ENCODE measurements at regions of chr12 and their contacts with region 1.

Region 1: GRCh38 chr12:69900720-69901131 is 75.7 kb downstream of the MYRFL start:
- DNase-seq: peak in 4 of 5 donors; percentile 61 to 81 (median 68)
- ATAC-seq: peak in 3 of 4 donors; percentile 49 to 65 (median 58)
- H3K4me3 ChIP-seq: no peak overlapping the region
- H3K27ac ChIP-seq: peak overlapping the region in 2 of 12 donors; percentile 2 to 25
- H3K4me1 ChIP-seq: peaks cover 0 to 32% (median 9%) of the 10 kb centered on the region in 12 donors
- H3K27me3 ChIP-seq: no peaks in the 10 kb centered on the region
- CTCF ChIP-seq: peak; percentile 78 to 93 (median 86)
- POLR2A ChIP-seq: no peak

Region 2: DNA sequence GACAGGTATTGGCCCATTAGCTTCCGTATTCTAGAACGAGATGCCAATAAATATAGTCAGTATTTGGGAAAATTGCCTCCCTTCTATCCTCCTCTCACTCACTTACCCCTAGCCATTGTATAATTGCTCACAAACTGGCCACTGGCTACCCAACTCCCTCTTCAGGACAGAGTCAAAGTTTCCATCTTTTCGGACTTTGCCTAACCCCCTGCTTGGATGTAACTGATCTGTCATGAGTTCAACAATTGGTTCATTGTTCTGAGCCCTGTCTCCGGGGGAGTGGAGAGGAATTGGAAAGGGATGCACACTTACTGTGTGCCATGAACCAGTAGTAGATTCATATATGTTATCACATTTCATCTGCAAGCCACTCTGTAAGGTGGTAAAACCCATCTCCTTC is 63.5 kb before region 1 on chr12:
- intact Hi-C with region 1: no loop called
- DNase-seq: no peak
- ATAC-seq: no peak
- H3K4me3 ChIP-seq: no peak overlapping the region
- H3K27ac ChIP-seq: no peak overlapping the region
- H3K4me1 ChIP-seq: peaks cover 0 to 7% (median 0%) of the 10 kb centered on the region in 12 donors
- H3K27me3 ChIP-seq: no peaks in the 10 kb centered on the region
- CTCF ChIP-seq: no peak
- POLR2A ChIP-seq: no peak

Region 3: DNA sequence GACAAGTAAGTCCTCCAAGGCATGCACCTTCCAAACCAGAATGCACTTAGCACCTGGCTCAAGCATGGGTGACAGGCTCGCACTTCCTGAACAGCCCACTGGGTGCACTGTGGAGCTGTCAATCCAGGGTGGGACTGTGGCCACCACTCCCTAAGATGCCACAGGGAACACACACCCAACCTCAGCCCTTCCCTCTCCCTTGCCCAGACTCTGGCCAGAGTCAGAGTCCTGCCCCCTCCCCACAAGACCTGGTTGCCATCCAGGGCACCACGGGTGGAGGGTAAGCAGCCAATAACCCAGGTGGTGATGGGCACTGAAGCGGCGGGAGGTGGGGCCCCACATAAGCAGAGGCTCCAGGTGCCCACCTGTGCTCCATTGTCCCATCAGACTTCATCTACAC is 84.9 kb after region 1 on chr12:
- intact Hi-C with region 1: loop called in 2 of 10 experiments (anchors 5 kb)
- DNase-seq: no peak
- ATAC-seq: no peak
- H3K4me3 ChIP-seq: no peak overlapping the region
- H3K27ac ChIP-seq: no peak overlapping the region
- H3K4me1 ChIP-seq: peaks cover 0 to 26% (median 10%) of the 10 kb centered on the region in 12 donors
- H3K27me3 ChIP-seq: no peaks in the 10 kb centered on the region
- CTCF ChIP-seq: peak in 2 of 12 donors; percentile 7 to 11
- POLR2A ChIP-seq: no peak

Region 4: DNA sequence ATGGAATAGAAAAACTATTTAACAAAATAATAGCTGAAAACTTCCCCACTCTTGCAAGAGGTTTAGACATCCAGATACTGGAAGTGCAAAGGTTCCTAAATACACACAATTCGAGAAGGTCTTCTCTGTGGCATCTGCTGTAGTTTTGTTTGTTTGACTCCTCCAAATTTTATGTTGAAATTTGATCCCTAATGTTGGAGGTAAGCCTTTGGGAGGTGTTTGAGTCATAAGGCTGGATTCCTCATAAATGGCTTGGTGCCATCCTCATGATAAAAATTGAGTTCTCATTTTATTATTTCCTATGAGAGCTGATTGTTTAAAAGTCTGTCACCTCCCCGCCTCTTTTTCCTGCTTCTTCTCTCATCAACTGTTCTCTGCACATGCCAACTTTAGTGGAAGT is 107.0 kb after region 1 on chr12:
- intact Hi-C with region 1: no loop called
- DNase-seq: no peak
- ATAC-seq: no peak
- H3K4me3 ChIP-seq: no peak overlapping the region
- H3K27ac ChIP-seq: no peak overlapping the region
- H3K4me1 ChIP-seq: peaks cover 0 to 4% (median 0%) of the 10 kb centered on the region in 12 donors
- H3K27me3 ChIP-seq: no peaks in the 10 kb centered on the region
- CTCF ChIP-seq: no peak
- POLR2A ChIP-seq: no peak

Region 5: DNA sequence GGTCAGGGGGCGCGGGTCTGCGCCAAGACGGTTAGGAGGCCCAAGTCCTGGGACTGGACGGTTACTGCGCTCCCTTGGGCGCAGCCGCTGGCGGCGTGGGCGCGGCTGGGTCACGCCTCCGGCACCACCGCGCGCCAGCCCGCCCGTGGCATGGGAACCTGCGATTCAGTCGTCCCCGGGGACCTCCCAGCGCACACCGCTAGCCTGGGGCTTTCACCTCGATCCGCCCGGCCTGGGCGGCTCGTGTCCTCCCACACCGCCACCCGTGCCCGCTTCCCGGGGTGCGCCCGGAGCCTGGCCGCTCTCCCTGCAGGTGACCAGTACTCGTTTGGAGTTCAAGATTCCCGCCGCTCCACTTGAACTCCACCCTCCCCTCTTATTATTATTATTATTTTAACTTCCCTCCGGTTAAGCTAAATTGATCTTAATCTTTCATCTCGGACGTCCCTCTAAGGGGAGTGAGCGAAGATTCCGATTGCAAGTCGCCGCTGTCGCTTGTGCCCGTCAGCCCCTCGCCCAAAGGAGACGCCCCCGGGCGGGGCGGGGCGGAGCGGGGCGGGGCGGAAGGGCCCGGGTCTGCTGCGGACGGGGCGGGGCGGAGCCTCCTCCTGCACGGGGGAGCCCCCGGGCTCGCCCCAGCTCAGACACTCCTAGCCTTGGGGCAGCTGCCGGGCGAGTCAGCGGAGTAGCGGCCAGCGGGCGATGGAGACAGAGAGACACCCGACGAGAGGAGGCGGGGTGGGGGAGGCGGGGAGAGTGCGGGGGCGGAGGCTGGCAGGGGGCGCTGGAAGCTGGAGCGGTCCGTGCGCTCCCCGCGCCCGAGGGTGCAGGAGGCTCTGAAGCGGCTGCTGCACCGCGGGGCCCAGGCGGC is 465.2 kb after region 1 on chr12 and contains the start of gene KCNMB4:
- intact Hi-C with region 1: loop called in 4 of 10 experiments (anchors 2 to 10 kb)
- DNase-seq: peak; percentile 66 to 79 (median 70)
- ATAC-seq: peak; percentile 57 to 96 (median 86)
- H3K4me3 ChIP-seq: peak within 1 kb of the TSS; percentile 39 to 87 (median 74)
- H3K27ac ChIP-seq: peak within 1 kb of the TSS in 9 of 12 donors; percentile 8 to 58 (median 48)
- H3K4me1 ChIP-seq: peaks cover 0 to 30% (median 10%) of the 10 kb centered on the region in 12 donors
- H3K27me3 ChIP-seq: peaks cover 0 to 21% (median 0%) of the 10 kb centered on the region in 9 donors
- CTCF ChIP-seq: no peak
- POLR2A ChIP-seq: no peak
- total RNA-seq, gene KCNMB4: 0.96 to 3.6 (median 2.1) TPM

Region 6: GRCh38 chr12:70379846-70380245 is 479.1 kb after region 1 on chr12:
- intact Hi-C with region 1: loop called in 1 of 10 experiments (anchors 10 kb)
- DNase-seq: no peak
- ATAC-seq: no peak
- H3K4me3 ChIP-seq: no peak overlapping the region
- H3K27ac ChIP-seq: no peak overlapping the region
- H3K4me1 ChIP-seq: no peaks in the 10 kb centered on the region
- H3K27me3 ChIP-seq: no peaks in the 10 kb centered on the region
- CTCF ChIP-seq: no peak
- POLR2A ChIP-seq: no peak

Region 7: GRCh38 chr12:70576346-70577282 is 675.9 kb after region 1 on chr12:
- intact Hi-C with region 1: loop called (anchors 1 to 5 kb)
- DNase-seq: peak in 1 of 5 donors; percentile 9
- ATAC-seq: peak in 3 of 4 donors; percentile 73 to 86 (median 82)
- H3K4me3 ChIP-seq: no peak overlapping the region
- H3K27ac ChIP-seq: peak overlapping the region in 2 of 12 donors; percentile 5 to 8
- H3K4me1 ChIP-seq: peaks cover 0 to 9% (median 0%) of the 10 kb centered on the region in 12 donors
- H3K27me3 ChIP-seq: no peaks in the 10 kb centered on the region
- CTCF ChIP-seq: peak; percentile 61 to 85 (median 82)
- POLR2A ChIP-seq: no peak